ENCODE measurements at regions of chr18 and their contacts with region 1.

Region 1: DNA sequence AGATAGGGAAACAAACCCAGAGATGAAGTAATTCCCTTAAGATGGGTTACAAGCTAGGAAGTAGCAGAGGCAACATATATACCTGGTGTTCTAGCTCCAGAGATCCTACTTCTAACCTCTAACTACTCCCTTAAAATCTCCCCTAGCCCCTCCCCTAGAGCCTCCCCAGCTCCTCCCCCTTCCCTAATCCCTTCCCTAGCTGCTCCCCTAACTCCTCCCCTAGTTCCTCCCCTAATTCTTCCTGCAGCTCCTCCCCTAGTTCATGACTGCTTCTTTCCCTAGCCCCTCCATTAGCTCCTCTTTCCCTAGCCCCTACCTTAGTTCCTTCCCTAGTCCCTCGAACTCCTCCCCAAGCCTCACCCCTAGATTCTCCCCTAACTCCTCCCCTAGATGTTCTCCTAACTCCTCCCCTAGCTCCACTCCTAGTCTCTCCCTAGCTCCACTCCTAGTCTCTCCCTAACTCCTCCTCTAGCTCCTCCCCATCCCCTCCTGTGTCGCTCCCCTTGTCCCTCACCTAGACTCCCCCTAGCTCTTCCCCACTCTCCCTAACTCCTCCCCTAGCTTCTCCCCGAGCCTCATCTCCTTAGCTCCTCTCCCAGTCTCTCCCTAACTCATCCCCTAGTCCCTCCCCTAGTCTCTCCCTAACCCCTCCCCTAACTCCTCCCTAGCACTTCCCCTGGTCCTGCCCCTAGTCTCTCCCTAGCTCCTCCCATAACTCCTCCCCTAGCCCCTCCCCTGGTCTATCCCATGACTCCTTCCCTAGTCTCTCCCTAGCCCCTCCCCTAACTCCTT is 108.9 kb downstream of the CD226 start:
- H3K4me3 ChIP-seq: no peak overlapping the region
- H3K27ac ChIP-seq: no peak overlapping the region
- H3K4me1 ChIP-seq: no peaks in the 10 kb centered on the region
- CTCF ChIP-seq: no peak

Region 2: GRCh38 chr18:69674292-69674877 is 164.4 kb before region 1 on chr18:
- CTCF ChIA-PET with region 1: no interaction called
- POLR2A ChIA-PET with region 1: no interaction called
- H3K4me3 ChIP-seq: no peak overlapping the region
- H3K27ac ChIP-seq: no peak overlapping the region
- H3K4me1 ChIP-seq: no peaks in the 10 kb centered on the region
- CTCF ChIP-seq: no peak

Region 3: GRCh38 chr18:70221156-70221914 is 382.5 kb after region 1 on chr18:
- CTCF ChIA-PET with region 1: no interaction called
- POLR2A ChIA-PET with region 1: no interaction called
- H3K4me3 ChIP-seq: no peak overlapping the region
- H3K27ac ChIP-seq: no peak overlapping the region
- H3K4me1 ChIP-seq: no peaks in the 10 kb centered on the region
- CTCF ChIP-seq: no peak

Region 4: GRCh38 chr18:70273021-70273420 is 434.2 kb after region 1 on chr18:
- CTCF ChIA-PET with region 1: no interaction called
- POLR2A ChIA-PET with region 1: interaction called, 10 read pairs
- H3K4me3 ChIP-seq: no peak overlapping the region
- H3K27ac ChIP-seq: no peak overlapping the region
- H3K4me1 ChIP-seq: no peaks in the 10 kb centered on the region
- CTCF ChIP-seq: no peak

Measured in HEK293 (cell line).